SK-N-SH (cell line): ENCODE measurements at regions of chr1 and their contacts with region 1.

Region 1: GRCh38 chr1:98749152-98749756 is 87.7 kb downstream of the SNX7 start:
- DNase-seq: no peak
- H3K4me3 ChIP-seq: no peak overlapping the region
- H3K27ac ChIP-seq: no peak overlapping the region
- H3K4me1 ChIP-seq: peaks cover 0 to 4% of the 10 kb centered on the region in 2 experiments; a peak in 2 of 4 replicates
- H3K27me3 ChIP-seq: no peaks in the 10 kb centered on the region
- CTCF ChIP-seq: peak; percentile 70
- EP300 ChIP-seq: no peak
- RAD21 ChIP-seq: peak; percentile 65

Region 2: DNA sequence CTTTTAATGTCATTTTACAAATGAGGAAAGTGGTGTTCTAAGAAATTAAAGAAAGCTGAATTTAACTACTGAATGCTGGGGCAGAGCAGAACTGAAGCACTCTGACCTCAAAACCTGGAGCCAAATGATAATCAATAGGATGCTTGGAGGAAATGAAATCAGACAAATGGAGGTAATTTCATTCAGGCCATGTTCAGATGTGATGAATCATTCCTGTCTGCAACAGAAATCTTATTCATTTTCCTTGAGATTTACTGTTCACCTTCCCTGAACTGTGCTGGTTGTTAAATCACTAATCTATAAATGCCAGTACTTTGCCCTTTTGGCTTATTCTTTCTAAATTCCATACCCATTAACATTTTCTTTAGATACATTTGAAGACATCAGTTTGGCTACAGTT is 173.3 kb before region 1 on chr1:
- CTCF ChIA-PET with region 1: no interaction called
- POLR2A ChIA-PET with region 1: no interaction called
- DNase-seq: no peak
- H3K4me3 ChIP-seq: no peak overlapping the region
- H3K27ac ChIP-seq: no peak overlapping the region
- H3K4me1 ChIP-seq: peaks cover 0 to 3% of the 10 kb centered on the region in 2 experiments; a peak in 1 of 4 replicates
- H3K27me3 ChIP-seq: no peaks in the 10 kb centered on the region
- CTCF ChIP-seq: no peak
- EP300 ChIP-seq: no peak
- RAD21 ChIP-seq: no peak

Region 3: DNA sequence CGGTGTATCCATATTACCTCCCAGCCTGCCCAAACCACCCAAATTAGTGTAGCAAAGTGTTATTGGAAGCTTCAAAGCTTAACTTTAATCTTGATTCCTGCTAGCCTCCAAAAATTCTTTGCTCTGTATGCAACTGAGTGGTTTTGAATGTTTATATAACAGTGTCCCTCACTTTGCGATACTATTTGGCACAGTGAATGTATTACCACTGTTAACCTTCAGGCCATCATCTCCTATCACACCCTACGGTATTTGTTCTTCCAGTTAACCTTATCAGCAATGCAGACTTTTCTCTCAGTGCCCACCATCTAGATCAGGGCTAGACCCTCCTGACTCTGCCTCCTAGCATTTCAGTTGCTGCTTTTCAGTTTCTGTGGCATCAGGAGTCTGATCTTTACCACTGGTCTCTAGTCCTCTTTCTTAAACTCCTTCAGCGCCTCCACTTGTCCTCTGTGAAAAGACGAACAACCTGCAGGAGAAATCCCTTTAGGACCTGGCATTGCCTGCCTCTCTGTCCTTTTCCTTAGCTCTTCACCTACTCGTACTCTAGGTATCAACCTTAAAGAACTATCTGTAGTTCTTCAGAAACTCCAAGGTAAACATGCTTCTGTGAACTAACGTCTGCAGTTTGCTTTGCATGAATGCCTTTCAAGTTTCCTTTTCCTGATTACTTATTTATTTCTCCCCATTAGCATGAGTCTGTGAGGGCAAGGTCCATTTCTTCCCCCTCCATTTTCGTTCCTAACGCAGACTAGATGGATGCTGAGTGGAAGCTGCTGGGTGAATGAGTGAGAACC is 16.1 kb before region 1 on chr1:
- CTCF ChIA-PET with region 1: interaction called, 23 read pairs
- POLR2A ChIA-PET with region 1: no interaction called
- DNase-seq: no peak
- H3K4me3 ChIP-seq: no peak overlapping the region
- H3K27ac ChIP-seq: no peak overlapping the region
- H3K4me1 ChIP-seq: no peaks in the 10 kb centered on the region
- H3K27me3 ChIP-seq: no peaks in the 10 kb centered on the region
- CTCF ChIP-seq: no peak
- EP300 ChIP-seq: no peak
- RAD21 ChIP-seq: no peak

Region 4: GRCh38 chr1:98761219-98761865 is 12.1 kb after region 1 on chr1:
- CTCF ChIA-PET with region 1: interaction called, 46 read pairs
- POLR2A ChIA-PET with region 1: no interaction called
- DNase-seq: no peak
- H3K4me3 ChIP-seq: no peak overlapping the region
- H3K27ac ChIP-seq: no peak overlapping the region
- H3K4me1 ChIP-seq: peaks cover 0 to 10% of the 10 kb centered on the region in 2 experiments; a peak in 2 of 4 replicates
- H3K27me3 ChIP-seq: no peaks in the 10 kb centered on the region
- CTCF ChIP-seq: peak; percentile 19; the same call in 1 of the 2 replicates
- EP300 ChIP-seq: no peak
- RAD21 ChIP-seq: peak; percentile 34; the same call in 1 of the 2 replicates

Region 5: GRCh38 chr1:98813738-98814309 is 64.6 kb after region 1 on chr1:
- CTCF ChIA-PET with region 1: no interaction called
- POLR2A ChIA-PET with region 1: no interaction called
- DNase-seq: no peak
- H3K4me3 ChIP-seq: no peak overlapping the region
- H3K27ac ChIP-seq: no peak overlapping the region
- H3K4me1 ChIP-seq: no peaks in the 10 kb centered on the region
- H3K27me3 ChIP-seq: no peaks in the 10 kb centered on the region
- CTCF ChIP-seq: no peak
- EP300 ChIP-seq: no peak
- RAD21 ChIP-seq: no peak

Region 6: GRCh38 chr1:98962156-98962555 is 212.9 kb after region 1 on chr1:
- CTCF ChIA-PET with region 1: no interaction called
- POLR2A ChIA-PET with region 1: no interaction called
- DNase-seq: no peak
- H3K4me3 ChIP-seq: no peak overlapping the region
- H3K27ac ChIP-seq: no peak overlapping the region
- H3K4me1 ChIP-seq: peaks cover 0 to 2% of the 10 kb centered on the region in 2 experiments; a peak in 1 of 4 replicates
- H3K27me3 ChIP-seq: no peaks in the 10 kb centered on the region
- CTCF ChIP-seq: no peak
- EP300 ChIP-seq: no peak
- RAD21 ChIP-seq: no peak

Region 7: GRCh38 chr1:99526926-99527477 is 777.7 kb after region 1 on chr1:
- CTCF ChIA-PET with region 1: interaction called, 13 read pairs
- POLR2A ChIA-PET with region 1: no interaction called
- DNase-seq: peak; percentile 8
- H3K4me3 ChIP-seq: no peak overlapping the region
- H3K27ac ChIP-seq: no peak overlapping the region; a peak in 1 of 4 replicates
- H3K4me1 ChIP-seq: peaks cover 0 to 3% of the 10 kb centered on the region in 2 experiments; a peak in 2 of 4 replicates
- H3K27me3 ChIP-seq: no peaks in the 10 kb centered on the region
- CTCF ChIP-seq: peak; percentile 58
- EP300 ChIP-seq: no peak
- RAD21 ChIP-seq: peak; percentile 68

Region 8: DNA sequence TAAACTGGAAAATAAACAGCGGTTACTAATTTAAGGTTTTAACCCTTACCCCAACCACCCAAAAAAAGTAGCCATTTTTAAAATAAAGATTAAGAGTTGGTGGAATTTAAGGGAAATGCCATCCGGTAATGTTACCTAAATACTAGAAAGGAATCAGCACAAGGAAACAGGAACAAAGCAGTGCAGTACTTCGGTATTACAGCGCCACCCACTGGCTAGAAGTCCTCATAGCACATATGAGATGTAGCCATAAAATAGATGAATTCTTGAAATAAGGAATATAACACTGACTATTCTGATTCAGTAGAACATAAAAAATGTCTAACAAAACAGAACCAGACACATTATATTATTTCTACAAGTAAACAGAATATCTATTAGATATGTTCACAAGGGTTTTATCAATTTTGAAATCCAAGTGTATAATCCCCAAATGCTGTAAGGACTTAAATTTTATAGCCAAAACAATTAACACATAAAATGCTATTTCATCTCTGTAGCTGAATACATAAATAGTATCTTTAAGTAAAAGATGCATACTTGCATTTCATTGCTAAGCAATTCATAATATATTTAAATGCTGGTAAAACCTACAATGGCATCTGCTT is 958.4 kb after region 1 on chr1:
- CTCF ChIA-PET with region 1: interaction called, 14 read pairs
- POLR2A ChIA-PET with region 1: no interaction called
- DNase-seq: peak; percentile 60
- H3K4me3 ChIP-seq: no peak overlapping the region
- H3K27ac ChIP-seq: no peak overlapping the region
- H3K4me1 ChIP-seq: no peaks in the 10 kb centered on the region; a peak in 3 of 4 replicates
- H3K27me3 ChIP-seq: no peaks in the 10 kb centered on the region
- CTCF ChIP-seq: peak; percentile 98
- EP300 ChIP-seq: no peak
- RAD21 ChIP-seq: peak; percentile 100